ENCODE measurements at regions of chr2 and their contacts with region 1.

Region 1: DNA sequence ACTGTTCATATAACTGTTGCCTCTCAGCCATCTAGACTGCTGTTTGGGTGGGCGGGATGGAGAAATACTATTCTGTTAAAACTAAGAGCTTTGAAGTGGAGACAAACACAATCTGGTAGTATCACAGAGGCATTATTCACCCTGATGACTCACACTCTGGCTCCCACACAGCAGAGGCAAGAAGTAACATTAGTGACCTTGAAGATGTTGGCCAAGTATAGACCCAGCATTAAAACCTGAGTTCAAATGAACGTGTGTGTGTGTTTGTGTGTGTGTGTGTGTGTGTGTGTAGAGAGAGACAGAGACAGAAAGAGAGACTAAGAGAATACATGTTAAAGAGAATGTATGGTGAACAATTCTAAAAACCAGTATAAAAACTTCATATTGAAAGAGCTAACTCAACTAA is 22.5 kb upstream of the ACVR1 start:
- DNase-seq: peak; percentile 87
- H3K4me3 Mint-ChIP-seq: peak overlapping the region; percentile 76
- H3K27ac Mint-ChIP-seq: peak overlapping the region; percentile 99
- H3K4me1 Mint-ChIP-seq: peaks cover 77% of the 10 kb centered on the region
- H3K27me3 Mint-ChIP-seq: no peaks in the 10 kb centered on the region

Region 2: DNA sequence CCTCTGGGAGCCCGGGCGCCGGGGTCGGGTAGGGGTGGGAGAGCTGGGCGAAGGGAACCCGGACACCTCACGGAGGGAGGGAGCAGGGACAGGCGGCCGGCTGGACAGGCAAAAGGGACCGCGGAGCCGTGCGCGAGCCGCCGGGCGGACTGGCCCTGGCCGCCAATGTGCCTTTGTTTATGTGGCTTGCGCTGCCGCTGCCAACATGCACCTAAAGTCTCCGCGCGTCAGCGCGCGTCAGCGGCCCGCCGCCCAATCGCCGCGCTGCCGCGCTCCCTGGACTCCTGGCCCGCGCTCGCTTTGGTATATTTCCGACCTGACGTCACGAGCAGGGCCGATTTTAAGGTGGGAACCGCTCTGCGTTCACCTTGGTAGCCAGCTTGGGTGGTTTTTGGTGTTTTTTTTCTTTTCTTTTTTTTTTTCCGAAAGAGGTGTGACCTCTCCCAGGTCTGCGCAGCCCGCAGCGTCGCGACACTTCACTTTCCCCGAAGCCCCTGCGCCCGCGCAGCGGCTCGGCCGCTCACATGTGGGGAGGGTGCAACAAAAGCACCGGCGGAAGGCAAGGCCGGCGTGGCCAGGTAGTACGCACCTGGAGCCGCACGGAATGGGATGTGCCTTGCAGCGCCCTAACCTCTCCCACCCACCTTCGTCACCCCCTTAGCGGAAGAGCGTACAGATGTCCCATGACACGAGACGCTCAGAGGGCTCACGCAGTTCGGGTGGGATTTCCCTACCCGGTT is 1565.9 kb before region 1 on chr2 and contains the start of gene NR4A2:
- CTCF ChIA-PET with region 1: no interaction called
- intact Hi-C with region 1: loop called (anchors 2 kb)
- DNase-seq: peak; percentile 92
- H3K4me3 Mint-ChIP-seq: peak within 1 kb of the TSS; percentile 87
- H3K27ac Mint-ChIP-seq: peak within 1 kb of the TSS; percentile 95
- H3K4me1 Mint-ChIP-seq: peaks cover 45% of the 10 kb centered on the region
- H3K27me3 Mint-ChIP-seq: no peaks in the 10 kb centered on the region
- total RNA-seq, gene NR4A2: 29.7 to 32.9 TPM

Region 3: DNA sequence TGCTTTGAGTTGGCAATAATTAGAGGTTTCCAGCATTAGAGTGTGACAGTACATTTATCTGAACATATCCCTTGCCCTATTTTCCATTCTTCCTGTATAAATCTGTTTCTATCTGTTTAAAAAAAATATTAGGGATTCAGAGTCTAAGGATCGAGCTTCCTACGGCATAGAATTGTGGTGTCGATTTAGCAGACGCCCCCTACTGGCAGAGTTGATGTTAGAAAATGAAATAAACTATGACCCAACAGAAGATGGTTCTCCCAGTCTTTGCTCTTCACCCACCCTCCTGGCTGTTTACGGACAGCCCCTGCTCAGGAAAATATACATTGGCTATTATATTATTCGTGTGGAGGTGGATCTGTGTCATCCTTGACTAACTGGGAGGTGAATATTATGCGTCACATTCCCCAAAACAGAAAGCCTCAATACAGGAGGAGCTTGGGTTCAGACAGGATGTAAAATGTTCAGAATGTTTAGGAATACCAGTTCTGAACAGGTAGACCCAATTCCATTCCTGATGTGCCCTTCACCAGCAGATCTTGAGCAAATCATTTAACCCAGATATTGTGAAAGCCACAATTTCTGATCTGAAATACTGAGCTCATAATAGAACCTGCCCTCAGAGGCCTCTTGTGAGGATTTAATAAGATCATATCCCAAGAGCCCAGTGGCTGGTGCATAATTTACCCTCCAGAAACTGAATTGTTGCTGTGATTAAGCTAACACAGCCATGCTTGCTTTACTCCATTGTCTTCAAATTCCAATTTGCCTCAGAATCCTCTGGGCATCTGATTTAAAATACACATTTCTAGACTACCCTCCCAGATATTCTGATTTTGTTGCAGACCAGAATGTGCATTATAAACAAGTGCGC is 562.2 kb before region 1 on chr2:
- CTCF ChIA-PET with region 1: interaction called, 3 read pairs
- intact Hi-C with region 1: loop called (anchors 2 kb)
- DNase-seq: peak; percentile 68
- H3K4me3 Mint-ChIP-seq: peak overlapping the region; percentile 40
- H3K27ac Mint-ChIP-seq: no peak overlapping the region
- H3K4me1 Mint-ChIP-seq: peaks cover 78% of the 10 kb centered on the region
- H3K27me3 Mint-ChIP-seq: no peaks in the 10 kb centered on the region

Region 4: GRCh38 chr2:157480182-157480961 is 418.2 kb before region 1 on chr2:
- CTCF ChIA-PET with region 1: interaction called, 4 read pairs
- intact Hi-C with region 1: loop called (anchors 1 kb)
- DNase-seq: peak; percentile 83
- H3K4me3 Mint-ChIP-seq: peak overlapping the region; percentile 64
- H3K27ac Mint-ChIP-seq: peak overlapping the region; percentile 95
- H3K4me1 Mint-ChIP-seq: peaks cover 85% of the 10 kb centered on the region
- H3K27me3 Mint-ChIP-seq: no peaks in the 10 kb centered on the region

Region 5: DNA sequence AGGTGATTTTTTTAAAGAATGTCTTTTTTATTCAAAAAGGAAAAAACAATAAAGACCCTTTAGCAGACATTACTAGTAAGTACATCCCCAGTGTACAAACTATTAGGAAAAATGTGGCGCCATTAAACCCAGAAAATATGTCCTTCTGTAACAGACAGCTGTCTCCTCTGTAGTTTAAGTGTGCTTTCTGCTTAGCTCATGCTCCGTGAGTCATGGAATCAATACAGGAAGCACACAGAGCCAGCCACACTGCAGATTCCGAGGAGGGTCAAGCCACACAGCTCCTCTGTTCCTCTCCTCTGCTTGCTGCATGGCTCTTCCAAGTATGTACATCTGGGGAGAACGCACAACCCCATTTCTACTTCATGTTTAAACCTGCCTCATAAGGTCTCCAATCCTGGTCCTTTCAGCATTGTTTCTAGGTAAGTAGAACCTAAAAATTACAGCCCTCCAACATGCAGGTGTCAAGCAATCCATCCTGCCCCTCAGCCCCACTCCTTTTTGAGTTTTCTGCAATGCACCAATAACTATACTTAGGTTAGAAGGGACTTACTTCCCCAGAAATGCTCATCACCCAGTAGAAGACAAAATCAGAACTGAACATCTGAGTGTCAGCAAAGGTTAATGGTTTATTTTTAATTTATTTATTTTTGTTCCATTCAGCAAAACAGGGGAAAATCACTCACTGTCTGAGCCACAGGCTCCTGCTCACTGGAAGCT is 60.0 kb before region 1 on chr2:
- CTCF ChIA-PET with region 1: interaction called, 3 read pairs
- intact Hi-C with region 1: loop called (anchors 1 kb)
- DNase-seq: peak; percentile 62
- H3K4me3 Mint-ChIP-seq: no peak overlapping the region
- H3K27ac Mint-ChIP-seq: peak overlapping the region; percentile 46
- H3K4me1 Mint-ChIP-seq: peaks cover 37% of the 10 kb centered on the region
- H3K27me3 Mint-ChIP-seq: no peaks in the 10 kb centered on the region

Region 6: DNA sequence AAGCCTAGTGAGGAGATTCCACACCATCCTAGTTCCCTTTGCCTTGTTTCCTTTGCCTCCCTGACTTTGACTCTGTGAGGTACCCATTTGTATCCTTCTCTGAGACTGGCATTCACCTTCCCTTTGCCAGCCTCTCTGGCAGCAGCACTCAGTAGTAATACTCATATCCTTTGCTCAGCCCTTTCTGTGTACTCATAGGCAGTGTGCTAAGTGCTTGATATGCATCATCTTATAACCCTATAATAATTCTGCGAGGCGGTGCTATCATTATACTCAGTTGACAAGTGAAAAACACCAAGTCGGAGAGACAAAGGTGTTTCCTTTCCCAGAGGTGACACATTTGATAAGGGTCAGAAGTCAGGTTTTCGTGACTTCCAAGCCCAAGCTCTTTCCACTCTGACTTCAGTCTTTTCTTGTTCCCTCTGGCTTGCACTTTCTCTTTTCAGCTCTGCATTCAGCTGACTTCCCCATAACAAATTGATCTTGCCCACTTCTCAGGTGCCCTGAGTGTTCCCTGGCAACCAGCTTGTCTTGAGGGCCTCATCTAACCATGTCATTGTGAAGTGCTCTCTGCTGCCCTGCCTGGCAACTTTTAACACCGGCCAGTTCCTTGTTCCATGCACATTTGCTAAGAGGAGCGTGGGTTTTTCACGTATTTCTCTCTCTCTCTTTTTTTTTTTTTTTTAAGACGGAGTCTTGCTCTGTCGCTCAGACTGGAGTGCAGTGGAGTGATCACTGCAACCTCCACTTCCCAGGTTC is 108.5 kb after region 1 on chr2:
- CTCF ChIA-PET with region 1: interaction called, 4 read pairs
- intact Hi-C with region 1: loop called (anchors 1 kb)
- DNase-seq: peak; percentile 35
- H3K4me3 Mint-ChIP-seq: no peak overlapping the region
- H3K27ac Mint-ChIP-seq: no peak overlapping the region
- H3K4me1 Mint-ChIP-seq: peaks cover 15% of the 10 kb centered on the region
- H3K27me3 Mint-ChIP-seq: no peaks in the 10 kb centered on the region

Measured in activated naive CD4-positive, alpha-beta T cell treated with anti-CD3 and anti-CD28 coated beads for 36 hours (primary cell).